Transverse colon (tissue), 4 donors: ENCODE measurements at regions of chr1 and their contacts with region 1.

Region 1: GRCh38 chr1:31715087-31715872 is 11.5 kb upstream of the COL16A1 start:
- DNase-seq: peak; percentile 93
- H3K4me3 ChIP-seq: peak overlapping the region; percentile 18 to 39 (median 23)
- H3K27ac ChIP-seq: peak overlapping the region; percentile 82 to 92 (median 88)
- H3K4me1 ChIP-seq: peaks cover 15 to 43% (median 35%) of the 10 kb centered on the region in 4 donors
- H3K27me3 ChIP-seq: peaks cover 8% of the 10 kb centered on the region
- CTCF ChIP-seq: peak; percentile 85 to 91 (median 88)
- EP300 ChIP-seq: no peak
- POLR2A ChIP-seq: peak; percentile 36

Region 2: GRCh38 chr1:31669786-31670592 is 45.3 kb before region 1 on chr1:
- in situ Hi-C with region 1: no loop called
- intact Hi-C with region 1: loop called (anchors 5 kb)
- DNase-seq: peak; percentile 90
- H3K4me3 ChIP-seq: peak overlapping the region in 3 of 4 donors; percentile 14 to 28 (median 21)
- H3K27ac ChIP-seq: peak overlapping the region; percentile 72 to 83 (median 78)
- H3K4me1 ChIP-seq: peaks cover 19 to 61% (median 43%) of the 10 kb centered on the region in 4 donors
- H3K27me3 ChIP-seq: peaks cover 3% of the 10 kb centered on the region
- CTCF ChIP-seq: peak in 3 of 5 experiments; percentile 7 to 34 (median 21)
- EP300 ChIP-seq: no peak
- POLR2A ChIP-seq: peak; percentile 72